Activated naive CD4-positive, alpha-beta T cell treated with anti-CD3 and anti-CD28 coated beads for 36 hours (primary cell): ENCODE measurements at regions of chr5 and their contacts with region 1.

Region 1: GRCh38 chr5:42994246-42995151 is 45.6 kb downstream of the ANXA2R start:
- DNase-seq: peak; percentile 94
- H3K4me3 Mint-ChIP-seq: peak overlapping the region; percentile 99
- H3K27ac Mint-ChIP-seq: peak overlapping the region; percentile 100
- H3K4me1 Mint-ChIP-seq: peaks cover 17% of the 10 kb centered on the region
- H3K27me3 Mint-ChIP-seq: no peaks in the 10 kb centered on the region

Region 2: DNA sequence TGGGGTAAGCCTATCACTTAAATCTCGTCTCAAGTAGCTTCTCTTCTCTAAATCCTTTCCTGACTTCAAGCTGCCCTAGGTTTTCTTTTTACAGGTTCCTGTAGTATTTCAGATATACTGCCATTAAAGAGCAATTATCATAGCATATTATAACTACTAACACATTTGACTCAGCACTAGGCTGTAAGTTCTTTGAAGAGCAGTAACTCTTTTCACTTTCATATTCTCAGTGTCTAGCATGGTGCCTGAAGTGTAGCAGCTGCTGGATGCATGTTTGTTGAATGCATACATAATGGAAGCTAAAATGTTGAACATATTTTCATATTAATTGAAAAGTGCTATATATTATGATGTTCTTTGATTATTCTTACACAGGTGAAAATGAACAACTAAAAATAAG is 215.4 kb before region 1 on chr5:
- CTCF ChIA-PET with region 1: no interaction called
- intact Hi-C with region 1: no loop called
- DNase-seq: no peak
- H3K4me3 Mint-ChIP-seq: no peak overlapping the region
- H3K27ac Mint-ChIP-seq: no peak overlapping the region
- H3K4me1 Mint-ChIP-seq: no peaks in the 10 kb centered on the region
- H3K27me3 Mint-ChIP-seq: no peaks in the 10 kb centered on the region

Region 3: DNA sequence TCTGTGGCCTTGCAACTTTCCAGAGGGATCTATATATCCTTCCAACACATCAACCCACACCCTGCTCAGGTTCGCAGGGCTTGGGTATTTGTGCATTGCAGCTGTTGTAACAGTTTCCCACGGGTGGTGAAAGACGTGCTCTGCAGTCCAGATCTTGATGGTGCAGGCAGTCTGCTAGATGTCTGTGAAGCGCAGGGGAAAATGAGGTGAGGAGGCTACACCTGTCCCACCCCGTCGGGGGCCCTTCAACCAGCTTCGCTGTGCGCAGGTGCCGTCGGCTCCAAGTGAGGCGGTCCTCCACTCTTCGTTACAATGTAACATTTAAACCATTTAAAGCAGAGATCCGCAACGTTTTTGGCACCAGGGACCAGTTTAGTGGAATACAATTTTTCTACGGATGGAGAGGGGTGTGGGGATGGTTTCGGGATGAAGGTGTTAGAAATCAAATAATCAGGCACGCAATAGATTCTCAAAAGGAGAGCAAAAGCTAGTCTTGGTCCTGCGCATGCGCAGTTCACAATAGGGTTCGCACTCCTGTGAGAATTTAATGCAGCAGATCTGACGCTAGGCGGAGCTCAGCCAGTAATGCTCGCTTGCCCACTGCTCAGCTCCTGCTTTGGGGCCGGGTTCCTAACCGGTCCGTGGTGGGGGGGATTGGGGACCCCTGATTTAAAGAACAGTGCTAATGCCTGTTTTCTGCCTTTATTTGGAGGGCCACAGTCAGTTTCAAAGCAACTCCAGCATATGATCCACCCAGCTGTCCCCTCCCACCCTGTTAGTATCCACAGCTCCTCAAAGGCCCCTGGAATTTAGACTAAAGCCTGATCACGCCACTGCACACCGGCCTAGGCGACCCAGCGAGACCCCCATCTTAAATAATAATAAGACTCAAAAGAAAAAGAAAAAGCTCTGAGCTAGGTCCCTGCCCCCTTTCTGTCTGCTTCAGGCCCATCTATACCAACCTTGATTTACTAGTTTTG is 85.7 kb before region 1 on chr5:
- CTCF ChIA-PET with region 1: interaction called, 15 read pairs
- intact Hi-C with region 1: loop called (anchors 1 kb)
- DNase-seq: peak; percentile 94
- H3K4me3 Mint-ChIP-seq: peak overlapping the region; percentile 92
- H3K27ac Mint-ChIP-seq: peak overlapping the region; percentile 75
- H3K4me1 Mint-ChIP-seq: peaks cover 10% of the 10 kb centered on the region
- H3K27me3 Mint-ChIP-seq: peaks cover 10% of the 10 kb centered on the region

Region 4: DNA sequence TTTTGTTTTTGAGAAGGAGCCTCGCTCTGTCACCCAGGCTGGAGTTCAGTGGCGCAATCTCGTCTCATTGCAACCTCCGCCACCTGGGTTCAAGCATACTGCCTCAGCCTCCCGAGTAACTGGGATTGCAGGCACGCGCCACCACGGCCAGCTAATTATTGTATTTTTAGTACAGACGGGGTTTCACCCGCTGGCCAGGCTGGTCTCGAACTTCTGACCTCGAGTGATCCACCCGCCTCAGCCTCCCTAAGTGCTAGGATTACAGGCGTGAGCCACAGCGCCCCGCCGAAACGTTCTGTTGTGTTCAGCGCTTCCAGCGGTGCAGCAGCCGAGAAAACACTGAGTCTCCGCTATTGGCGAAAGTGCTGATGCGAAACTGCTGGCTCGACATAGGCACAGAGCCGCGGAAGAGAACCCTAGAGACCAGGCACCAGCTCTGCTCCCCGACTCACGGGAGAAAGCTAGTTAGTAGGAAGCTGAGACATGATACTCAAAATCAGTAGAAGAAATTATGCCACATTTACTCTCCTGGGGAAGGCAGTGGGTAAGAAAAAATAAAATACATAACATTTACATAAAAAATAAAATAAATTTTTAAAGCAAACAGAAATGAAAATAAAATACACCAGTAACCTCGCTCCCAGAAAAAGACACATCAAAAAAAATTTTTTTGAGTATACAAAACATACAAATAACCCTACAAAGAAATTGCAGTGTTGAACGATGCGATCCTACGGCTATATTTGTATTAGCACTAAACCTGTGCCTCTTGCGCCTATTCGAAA is 14.1 kb after region 1 on chr5:
- CTCF ChIA-PET with region 1: interaction called, 144 read pairs
- intact Hi-C with region 1: loop called (anchors 1 kb)
- DNase-seq: peak; percentile 93
- H3K4me3 Mint-ChIP-seq: peak overlapping the region; percentile 79
- H3K27ac Mint-ChIP-seq: peak overlapping the region; percentile 97
- H3K4me1 Mint-ChIP-seq: peaks cover 24% of the 10 kb centered on the region
- H3K27me3 Mint-ChIP-seq: no peaks in the 10 kb centered on the region

Region 5: DNA sequence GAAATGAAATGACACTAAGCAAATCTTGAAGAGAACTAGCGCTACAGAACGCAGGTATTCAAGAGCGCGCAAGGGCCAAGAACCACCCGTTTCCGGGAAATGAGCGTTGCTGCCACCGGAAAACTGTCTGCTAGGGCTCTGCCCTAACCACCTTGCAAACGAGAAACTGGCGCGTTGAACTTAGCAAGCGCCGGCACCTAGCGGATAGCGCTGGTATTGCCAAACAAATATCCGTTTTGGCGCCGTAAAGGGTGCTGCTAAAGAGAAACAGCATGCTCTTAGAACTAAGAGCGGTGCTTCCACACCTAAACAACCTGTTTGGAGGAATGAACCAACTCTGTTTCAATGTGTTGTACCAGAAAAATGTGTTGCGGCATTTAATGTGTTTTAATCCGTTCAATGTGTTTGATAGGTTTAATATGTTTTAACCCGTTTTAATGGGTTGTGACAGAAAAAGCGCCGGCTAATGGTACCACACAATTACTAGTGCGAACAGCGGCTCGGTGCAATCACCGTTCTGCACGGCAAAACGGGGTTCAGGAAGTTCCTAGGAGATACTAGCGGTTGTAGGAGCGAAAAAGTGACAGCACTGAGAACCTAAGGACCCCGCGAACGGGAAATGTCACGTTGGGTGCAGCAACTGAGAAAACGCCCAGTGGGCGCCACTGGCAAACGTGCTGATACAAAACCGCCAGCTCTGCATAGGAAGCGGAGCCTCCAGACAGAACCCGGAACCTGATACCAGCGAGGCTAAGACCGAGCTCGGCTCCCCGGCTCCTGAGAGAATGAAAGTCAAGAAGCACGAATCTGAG is 46.0 kb after region 1 on chr5 and contains the start of gene ANXA2R:
- CTCF ChIA-PET with region 1: interaction called, 47 read pairs
- intact Hi-C with region 1: loop called (anchors 1 kb)
- DNase-seq: peak; percentile 98
- H3K4me3 Mint-ChIP-seq: peak within 1 kb of the TSS; percentile 96
- H3K27ac Mint-ChIP-seq: peak within 1 kb of the TSS; percentile 99
- H3K4me1 Mint-ChIP-seq: peaks cover 26% of the 10 kb centered on the region
- H3K27me3 Mint-ChIP-seq: no peaks in the 10 kb centered on the region
- total RNA-seq, gene ANXA2R: 6.0 to 6.5 TPM

Region 6: DNA sequence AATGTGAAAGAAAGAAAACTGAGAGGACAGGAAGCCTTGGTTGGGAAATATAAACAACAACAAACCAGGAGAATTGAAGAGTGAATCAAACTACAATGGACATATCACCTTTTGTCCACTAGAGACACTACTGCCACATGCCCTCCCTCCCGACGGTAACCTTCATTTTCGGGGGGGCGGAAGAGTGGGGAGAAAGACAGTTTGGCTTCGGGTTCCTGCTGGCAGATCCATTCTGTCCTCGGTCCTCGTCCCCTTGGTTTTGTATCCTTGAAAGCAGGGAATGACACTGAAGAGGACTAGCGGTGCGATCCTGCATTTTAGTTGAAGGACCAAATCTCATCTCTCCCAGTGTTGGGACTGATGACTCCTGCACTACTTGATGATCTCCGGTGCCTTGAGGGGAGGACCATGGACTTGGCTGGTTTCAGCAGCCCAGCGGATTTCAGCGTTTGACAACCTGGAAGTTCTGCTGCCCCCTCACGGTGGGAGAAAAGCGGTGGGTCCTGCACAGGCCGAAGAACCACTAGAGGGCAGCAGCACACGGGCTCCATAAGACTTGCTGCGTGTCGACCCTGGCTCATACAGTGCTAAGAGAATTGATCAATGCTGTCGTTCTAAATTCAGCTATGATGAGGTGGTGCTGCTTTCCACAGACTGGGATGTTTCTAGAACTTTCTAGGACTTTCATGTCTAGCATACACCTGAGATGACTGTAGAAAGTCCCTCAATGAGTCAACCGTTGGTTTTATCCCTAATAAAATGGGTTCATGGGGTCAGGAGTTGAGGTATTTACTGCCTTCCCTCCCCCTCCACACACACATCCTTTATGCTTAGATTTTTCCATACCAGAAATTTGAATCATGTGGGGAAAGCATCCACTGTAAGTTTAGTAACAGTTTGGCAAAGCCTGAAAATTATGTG is 111.1 kb after region 1 on chr5:
- CTCF ChIA-PET with region 1: interaction called, 3 read pairs
- intact Hi-C with region 1: loop called (anchors 1 kb)
- DNase-seq: peak; percentile 92
- H3K4me3 Mint-ChIP-seq: peak overlapping the region; percentile 81
- H3K27ac Mint-ChIP-seq: peak overlapping the region; percentile 87
- H3K4me1 Mint-ChIP-seq: peaks cover 42% of the 10 kb centered on the region
- H3K27me3 Mint-ChIP-seq: no peaks in the 10 kb centered on the region

Region 7: GRCh38 chr5:43389679-43390329 is 395.3 kb after region 1 on chr5:
- CTCF ChIA-PET with region 1: no interaction called
- intact Hi-C with region 1: loop called (anchors 2 kb)
- DNase-seq: peak; percentile 72
- H3K4me3 Mint-ChIP-seq: no peak overlapping the region
- H3K27ac Mint-ChIP-seq: no peak overlapping the region
- H3K4me1 Mint-ChIP-seq: peaks cover 32% of the 10 kb centered on the region
- H3K27me3 Mint-ChIP-seq: no peaks in the 10 kb centered on the region

Region 8: DNA sequence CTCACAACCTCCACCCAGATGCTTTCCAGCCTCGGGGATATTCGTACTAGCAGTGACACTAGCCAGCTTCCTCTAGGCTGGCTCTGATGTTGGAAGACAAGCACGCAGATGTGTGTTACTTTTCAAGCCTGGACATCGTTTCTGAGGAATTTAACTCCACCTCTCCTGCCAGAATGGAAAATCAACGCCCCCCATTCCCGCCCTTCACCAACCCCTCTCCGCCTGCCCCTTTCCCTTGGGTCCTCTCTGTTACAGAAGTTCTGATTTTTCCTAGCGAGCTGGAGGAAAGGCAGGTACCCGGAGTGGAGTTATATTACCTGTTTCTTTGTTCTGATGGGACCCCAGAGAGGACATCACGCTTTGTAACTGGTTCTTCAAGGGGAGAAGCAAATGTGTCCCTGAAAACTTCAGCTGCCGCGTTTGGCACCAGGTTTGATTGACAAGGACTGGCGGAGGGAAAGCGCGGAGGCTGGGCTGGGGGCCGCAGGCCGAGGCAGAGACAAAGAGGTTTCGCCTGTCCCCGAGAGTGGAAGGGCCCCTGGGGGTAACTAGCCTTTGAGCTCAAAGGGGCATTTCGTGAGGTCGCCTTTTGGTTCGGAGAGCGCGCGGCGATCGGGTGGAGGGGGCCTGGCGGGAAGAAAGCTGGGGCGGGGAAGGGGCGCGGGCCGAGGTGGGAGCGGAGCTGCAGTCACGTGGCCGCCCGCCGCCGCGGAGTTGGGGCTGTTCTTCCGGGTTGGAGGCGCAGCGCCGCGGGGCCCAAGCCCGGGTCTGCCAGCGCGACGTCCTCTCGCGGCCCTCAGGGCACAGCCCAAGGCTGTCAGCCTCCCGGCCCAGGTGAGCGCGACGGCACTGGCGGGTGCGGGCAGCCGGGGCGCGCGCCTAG is 608.2 kb after region 1 on chr5 and contains the start of gene NNT:
- CTCF ChIA-PET with region 1: interaction called, 3 read pairs
- intact Hi-C with region 1: loop called (anchors 5 kb)
- DNase-seq: peak; percentile 74
- H3K4me3 Mint-ChIP-seq: peak within 1 kb of the TSS; percentile 87
- H3K27ac Mint-ChIP-seq: peak within 1 kb of the TSS; percentile 92
- H3K4me1 Mint-ChIP-seq: peaks cover 45% of the 10 kb centered on the region
- H3K27me3 Mint-ChIP-seq: no peaks in the 10 kb centered on the region
- total RNA-seq, gene NNT: 98.4 to 98.9 TPM